ENCODE measurements at regions of chr7 and their contacts with region 1.

Region 1: DNA sequence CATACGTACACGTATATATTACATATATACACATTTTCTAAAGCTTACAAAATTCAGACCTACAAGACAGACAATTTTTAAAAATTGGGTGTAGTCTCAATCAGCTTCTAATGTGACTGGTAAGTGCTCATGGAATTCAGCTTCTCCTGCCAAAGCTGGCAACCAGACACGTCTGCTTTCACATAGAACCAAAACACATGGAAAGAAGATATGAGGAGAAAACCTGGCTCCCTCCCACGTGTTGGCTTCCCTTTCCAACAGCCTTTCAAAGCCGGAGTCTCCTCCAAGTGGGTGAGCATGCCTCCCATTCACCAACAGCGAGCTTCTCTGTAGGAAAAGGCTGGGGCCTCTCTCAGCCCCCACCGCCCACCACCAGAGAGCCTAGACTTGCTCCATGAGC is 33.4 kb downstream of the CDCA7L start:
- DNase-seq: no peak
- H3K4me3 ChIP-seq: no peak overlapping the region
- H3K27ac ChIP-seq: no peak overlapping the region
- H3K4me1 ChIP-seq: peaks cover 0 to 16% (median 11%) of the 10 kb centered on the region in 4 experiments
- H3K27me3 ChIP-seq: no peaks in the 10 kb centered on the region

Region 2: GRCh38 chr7:21891291-21891690 is 21.0 kb before region 1 on chr7:
- CTCF ChIA-PET with region 1: no interaction called
- POLR2A ChIA-PET with region 1: no interaction called
- DNase-seq: no peak
- H3K4me3 ChIP-seq: no peak overlapping the region
- H3K27ac ChIP-seq: no peak overlapping the region
- H3K4me1 ChIP-seq: no peaks in the 10 kb centered on the region
- H3K27me3 ChIP-seq: no peaks in the 10 kb centered on the region

Region 3: DNA sequence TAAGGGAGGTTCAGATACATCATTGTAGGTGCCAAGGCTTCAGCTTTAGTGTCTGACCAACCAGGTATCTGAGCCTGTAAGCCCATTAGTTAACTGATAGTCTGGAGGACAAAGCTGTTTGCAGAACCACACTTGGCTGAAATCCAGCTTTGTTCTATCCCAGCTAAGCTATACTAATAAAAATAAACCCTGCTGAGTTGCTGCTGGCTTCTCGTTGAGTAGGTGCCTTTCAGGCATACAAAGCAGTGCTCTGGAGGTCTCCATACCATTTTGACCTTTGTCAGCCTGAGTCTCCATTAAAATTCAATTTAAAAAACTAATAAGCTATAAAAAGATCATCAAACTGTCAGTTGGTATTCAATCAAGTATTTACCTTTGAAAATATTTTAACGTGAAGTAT is 11.4 kb after region 1 on chr7:
- CTCF ChIA-PET with region 1: interaction called, 10 read pairs
- POLR2A ChIA-PET with region 1: no interaction called
- DNase-seq: no peak
- H3K4me3 ChIP-seq: no peak overlapping the region
- H3K27ac ChIP-seq: no peak overlapping the region
- H3K4me1 ChIP-seq: peaks cover 0 to 10% (median 3%) of the 10 kb centered on the region in 4 experiments
- H3K27me3 ChIP-seq: no peaks in the 10 kb centered on the region

Measured in common myeloid progenitor, CD34-positive (primary cell).